ENCODE measurements at regions of chrX and their contacts with region 1.

Region 1: GRCh38 chrX:16436348-16437188 is 213.4 kb upstream of the S100G start:
- DNase-seq: no peak
- H3K4me3 ChIP-seq: no peak overlapping the region
- H3K27ac ChIP-seq: no peak overlapping the region
- H3K4me1 ChIP-seq: no peaks in the 10 kb centered on the region
- H3K27me3 ChIP-seq: peaks cover 0 to 4% (median 0%) of the 10 kb centered on the region in 4 donors
- CTCF ChIP-seq: peak in 5 of 6 experiments; percentile 33 to 57 (median 53)
- POLR2A ChIP-seq: no peak

Region 2: DNA sequence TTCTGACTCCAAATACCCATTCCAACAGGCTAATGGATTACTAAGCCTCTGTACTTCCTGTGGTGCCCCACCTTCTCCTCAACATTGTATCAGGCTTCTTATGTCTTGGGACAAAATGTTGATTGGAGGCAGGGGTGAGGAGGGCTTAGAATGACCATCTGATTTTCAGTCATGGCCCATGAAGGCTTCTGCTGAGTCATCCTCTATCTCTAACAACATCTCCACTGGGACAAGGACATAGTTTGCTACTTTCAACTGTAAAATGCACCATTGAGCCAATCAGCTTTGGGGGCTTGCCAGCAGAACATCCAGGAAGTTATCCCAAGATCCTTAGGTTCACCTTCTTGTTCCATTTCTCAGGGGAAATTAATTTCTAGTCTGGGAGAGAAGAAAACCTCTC is 239.7 kb before region 1 on chrX:
- intact Hi-C with region 1: no loop called
- DNase-seq: no peak
- H3K4me3 ChIP-seq: no peak overlapping the region
- H3K27ac ChIP-seq: no peak overlapping the region
- H3K4me1 ChIP-seq: no peaks in the 10 kb centered on the region
- H3K27me3 ChIP-seq: no peaks in the 10 kb centered on the region
- CTCF ChIP-seq: no peak
- POLR2A ChIP-seq: no peak

Region 3: DNA sequence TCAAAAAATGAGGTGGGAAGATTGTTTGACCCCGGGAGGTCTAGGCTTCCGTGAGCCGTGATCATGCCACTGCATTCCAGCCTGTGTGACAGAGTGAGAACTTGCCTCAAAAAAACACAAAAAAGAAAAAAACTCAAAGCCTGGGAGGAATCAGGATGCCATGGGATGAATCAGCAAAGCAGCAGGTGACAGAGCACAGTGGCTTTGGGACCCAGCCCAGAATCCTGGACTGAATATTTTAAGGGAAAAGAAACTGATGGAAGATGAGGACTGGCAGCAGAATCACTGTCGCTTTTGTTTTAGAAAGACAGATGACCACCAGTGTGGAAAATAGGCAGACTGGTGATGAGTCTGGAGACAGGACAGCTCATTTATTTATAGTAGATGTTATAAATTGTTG is 230.0 kb after region 1 on chrX:
- intact Hi-C with region 1: loop called (anchors 10 kb)
- DNase-seq: no peak
- H3K4me3 ChIP-seq: no peak overlapping the region
- H3K27ac ChIP-seq: no peak overlapping the region
- H3K4me1 ChIP-seq: no peaks in the 10 kb centered on the region
- H3K27me3 ChIP-seq: no peaks in the 10 kb centered on the region
- CTCF ChIP-seq: no peak
- POLR2A ChIP-seq: no peak

Region 4: DNA sequence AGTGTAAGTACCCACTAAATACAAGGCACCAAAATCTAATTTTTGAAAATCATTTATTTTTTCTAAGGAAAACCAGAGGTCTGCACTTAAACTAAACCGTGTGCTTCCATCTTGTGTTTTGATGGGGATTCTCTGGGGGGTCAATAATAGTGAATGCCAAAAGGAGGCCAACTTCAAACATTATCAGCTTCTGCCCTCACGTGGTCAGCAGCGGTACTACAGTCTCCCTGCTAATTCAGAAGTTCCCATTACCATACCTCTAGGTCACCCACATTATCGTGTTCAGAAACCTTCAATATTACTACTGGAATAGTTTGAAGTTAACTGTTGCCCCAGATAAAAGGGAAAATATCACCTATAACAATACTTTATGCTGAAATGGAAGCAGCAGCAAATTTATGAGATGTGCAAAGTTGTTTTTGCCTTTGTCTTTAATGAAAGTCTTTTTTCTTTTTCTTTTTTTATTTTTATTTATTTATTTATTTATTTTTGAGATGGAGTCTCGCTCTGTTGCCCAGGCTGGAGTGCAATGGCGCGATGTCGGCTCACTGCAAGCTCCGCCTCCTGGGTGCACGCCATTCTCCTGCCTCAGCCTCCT is 258.6 kb after region 1 on chrX:
- intact Hi-C with region 1: loop called (anchors 10 kb)
- DNase-seq: no peak
- H3K4me3 ChIP-seq: no peak overlapping the region
- H3K27ac ChIP-seq: no peak overlapping the region
- H3K4me1 ChIP-seq: no peaks in the 10 kb centered on the region
- H3K27me3 ChIP-seq: no peaks in the 10 kb centered on the region
- CTCF ChIP-seq: peak; percentile 68 to 93 (median 76)
- POLR2A ChIP-seq: no peak